HAP-1 (cell line): ENCODE measurements at regions of chr3 and their contacts with region 1.

Region 1: DNA sequence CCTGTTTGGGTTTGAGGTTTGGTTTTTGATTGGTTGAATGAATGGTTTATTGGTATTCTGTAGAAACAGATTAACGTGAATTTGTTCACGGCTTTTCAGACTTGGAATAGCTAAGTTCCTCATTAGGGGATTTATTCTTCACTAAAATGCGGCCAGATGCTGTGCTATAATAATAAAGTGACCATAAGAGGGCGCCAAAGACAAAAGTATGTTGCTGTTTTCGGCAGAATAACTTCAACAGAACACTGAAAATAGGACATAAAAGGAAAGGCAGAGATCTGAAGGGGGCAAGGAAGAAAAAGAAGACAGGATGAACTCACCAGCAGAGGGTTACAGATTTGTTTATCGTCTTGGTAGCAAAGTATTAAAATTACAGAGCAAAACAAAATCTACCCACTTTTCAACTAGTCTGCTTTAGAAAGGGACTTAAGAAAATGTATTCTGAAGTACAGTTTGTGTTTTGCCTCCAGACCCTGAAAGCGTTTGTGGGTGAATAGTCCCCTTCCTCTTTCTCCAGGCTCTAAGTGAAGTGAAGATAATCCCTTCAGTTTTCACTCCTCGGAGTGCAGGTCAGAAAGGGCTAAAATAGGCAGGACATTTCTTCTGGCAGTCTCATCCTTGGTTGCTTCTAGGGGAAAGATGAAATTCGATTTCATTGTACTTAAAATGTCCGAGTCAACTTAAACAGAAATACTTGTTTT is 147.6 kb downstream of the IL20RB start:
- DNase-seq: peak; percentile 52 to 74
- H3K4me3 ChIP-seq: no peak overlapping the region
- H3K4me1 ChIP-seq: peaks cover 5% of the 10 kb centered on the region; the same call in 1 of the 2 replicates
- H3K27me3 ChIP-seq: peaks cover 16% of the 10 kb centered on the region

Region 2: DNA sequence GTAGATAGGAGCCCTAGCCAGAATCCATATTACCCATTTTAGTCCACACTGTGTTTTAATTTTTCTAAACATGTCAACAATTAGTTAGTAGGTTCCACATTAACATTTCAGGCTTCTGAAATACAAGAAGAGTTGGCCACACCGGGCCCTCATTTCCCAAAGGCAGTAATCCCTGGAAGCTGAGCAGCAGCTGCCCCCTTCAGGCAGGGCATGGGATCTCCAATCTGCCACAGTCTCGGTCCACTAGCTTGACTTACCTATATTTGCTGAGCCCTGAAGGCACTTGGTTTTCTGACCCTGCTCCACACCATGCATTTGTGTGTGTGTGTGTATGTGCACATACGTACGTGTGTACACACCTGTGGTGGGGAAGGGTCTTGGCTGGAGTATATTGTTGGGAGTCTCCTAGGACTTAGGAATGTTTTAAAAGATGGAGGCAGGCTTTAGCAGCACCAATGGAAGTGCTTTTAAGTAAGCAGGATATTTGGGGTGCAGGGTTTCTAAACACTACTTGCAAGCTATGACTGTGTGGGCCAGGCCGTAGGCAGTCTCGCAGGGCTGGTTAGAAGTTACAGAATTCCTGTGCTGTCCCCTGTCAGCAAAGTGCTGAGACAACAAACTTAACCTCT is 587.5 kb after region 1 on chr3:
- in situ Hi-C with region 1: loop called (anchors 25 kb)
- DNase-seq: peak; percentile 27 to 64
- H3K4me3 ChIP-seq: no peak overlapping the region
- H3K4me1 ChIP-seq: no peaks in the 10 kb centered on the region
- H3K27me3 ChIP-seq: no peaks in the 10 kb centered on the region

Region 3: DNA sequence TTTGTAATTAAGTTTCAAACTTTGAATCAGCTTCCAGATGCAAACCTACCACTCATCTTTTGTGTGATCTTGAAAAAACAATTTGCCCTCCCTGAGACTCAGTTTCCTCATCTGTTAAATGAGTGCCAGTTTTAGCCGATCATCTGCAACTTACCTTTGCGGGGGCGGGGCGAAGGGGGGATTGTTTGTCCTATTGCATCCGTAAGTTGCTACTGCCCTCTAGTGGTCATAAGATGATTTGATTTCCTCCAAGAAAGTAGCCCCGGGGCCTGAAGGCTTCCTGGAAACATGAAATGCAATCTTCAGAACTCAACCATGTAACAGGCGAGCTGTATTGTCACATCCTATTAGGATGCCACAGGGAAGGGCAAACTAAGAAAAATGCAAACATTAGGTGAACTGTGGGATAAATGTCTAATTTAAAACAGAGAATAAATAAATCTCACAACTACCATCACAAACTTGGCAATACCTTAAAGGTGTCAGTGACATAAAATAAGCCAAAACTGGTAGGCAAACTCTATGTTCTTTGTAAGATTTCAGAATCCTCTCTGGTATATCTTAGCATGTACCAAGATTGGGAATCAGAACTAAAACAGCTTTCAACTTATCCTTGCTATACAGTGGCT is 841.0 kb after region 1 on chr3:
- in situ Hi-C with region 1: loop called (anchors 25 kb)
- DNase-seq: peak; percentile 64 to 78
- H3K4me3 ChIP-seq: no peak overlapping the region
- H3K4me1 ChIP-seq: no peaks in the 10 kb centered on the region
- H3K27me3 ChIP-seq: no peaks in the 10 kb centered on the region; the same call in 1 of the 2 replicates

Region 4: DNA sequence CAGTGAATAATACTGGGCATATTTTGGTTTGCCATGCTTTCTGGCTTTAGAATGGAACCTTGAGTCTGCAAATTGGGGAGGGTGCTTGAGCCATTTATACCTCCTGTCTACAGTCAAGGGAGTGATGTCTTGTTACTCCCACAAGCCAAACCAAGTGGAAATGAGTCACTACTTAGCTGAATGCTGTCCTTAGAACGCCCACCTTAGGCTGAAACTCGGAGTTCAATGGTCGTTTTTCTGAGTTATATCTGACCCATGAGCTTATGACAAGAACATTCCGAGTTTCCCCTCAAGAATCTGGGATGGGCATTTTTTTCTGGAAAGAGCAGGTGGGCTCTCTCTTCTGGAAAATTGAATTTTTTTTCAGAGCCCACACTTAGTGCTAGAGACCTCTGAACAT is 887.2 kb after region 1 on chr3:
- in situ Hi-C with region 1: no loop called
- DNase-seq: no peak
- H3K4me3 ChIP-seq: no peak overlapping the region
- H3K4me1 ChIP-seq: no peaks in the 10 kb centered on the region
- H3K27me3 ChIP-seq: no peaks in the 10 kb centered on the region; the same call in 1 of the 2 replicates

Region 5: DNA sequence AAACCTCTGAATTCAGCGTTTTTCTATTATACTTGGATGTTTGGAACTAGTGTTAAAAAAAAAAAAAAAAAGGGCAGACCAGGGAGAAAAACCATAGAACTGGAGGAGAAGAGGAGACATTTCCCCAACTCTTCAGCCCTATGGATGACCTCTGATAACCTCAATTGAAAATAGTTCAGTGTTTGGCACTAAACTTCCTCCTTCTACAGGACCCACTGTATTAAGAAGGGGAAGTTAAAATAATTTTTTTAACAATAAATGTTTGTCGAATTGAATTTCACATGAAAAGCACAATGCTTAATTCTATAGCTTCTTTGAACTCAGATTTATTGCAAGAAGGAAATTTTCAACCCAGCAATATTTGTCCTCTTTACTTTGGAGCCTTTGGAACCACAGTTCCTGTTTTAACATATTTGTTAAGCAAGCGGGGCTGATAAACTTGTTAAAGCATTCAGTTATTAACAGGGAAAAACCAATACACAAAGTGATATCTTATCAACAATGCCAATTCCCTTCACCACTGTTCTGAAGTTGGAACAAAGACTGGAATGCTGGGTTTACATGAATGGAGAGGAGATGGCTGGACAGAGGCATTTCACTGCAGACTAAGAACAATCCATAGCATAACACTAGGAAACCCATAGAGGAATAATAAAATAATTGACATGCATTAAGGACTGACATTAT is 1029.9 kb after region 1 on chr3:
- in situ Hi-C with region 1: no loop called
- DNase-seq: no peak
- H3K4me3 ChIP-seq: no peak overlapping the region
- H3K4me1 ChIP-seq: no peaks in the 10 kb centered on the region
- H3K27me3 ChIP-seq: peaks cover 10% of the 10 kb centered on the region